Posterior vena cava (tissue), 2 donors: ENCODE measurements at regions of chr15 and their contacts with region 1.

Region 1: GRCh38 chr15:33132722-33133345 is 61.7 kb downstream of the FMN1 start:
- DNase-seq: no peak

Region 2: GRCh38 chr15:32651229-32651837 is 481.5 kb before region 1 on chr15:
- intact Hi-C with region 1: loop called in 1 of 2 experiments (anchors 10 kb)
- DNase-seq: no peak

Region 3: DNA sequence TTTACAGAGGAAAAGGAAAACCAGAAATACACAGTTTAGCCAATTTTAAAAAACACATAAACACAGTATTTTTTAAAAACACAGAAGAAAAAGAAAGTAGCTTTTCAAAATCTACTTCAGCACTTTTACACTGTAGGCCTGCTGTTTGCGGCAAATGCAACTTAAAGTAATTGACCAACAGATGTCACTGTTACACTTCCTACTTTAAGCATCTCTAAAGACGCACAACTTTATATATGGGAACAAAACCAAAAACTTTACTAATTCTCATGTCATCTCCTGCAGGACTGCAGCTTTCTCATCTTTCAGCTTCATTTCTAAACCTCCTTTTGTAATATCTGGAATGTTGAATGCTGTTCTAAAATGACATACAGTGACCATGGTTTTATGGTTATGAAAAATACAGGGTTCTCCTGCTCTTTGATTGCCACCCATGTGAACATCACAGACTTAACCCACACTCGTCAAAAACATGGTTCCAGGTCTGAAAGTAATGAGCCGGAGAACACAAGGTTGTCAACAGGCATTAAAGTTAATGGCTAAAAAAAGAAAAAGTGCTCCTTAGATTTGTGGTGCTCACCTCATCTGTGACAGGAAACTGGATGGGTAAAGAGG is 46.2 kb before region 1 on chr15:
- intact Hi-C with region 1: loop called in 1 of 2 experiments (anchors 10 kb)
- DNase-seq: no peak

Region 4: DNA sequence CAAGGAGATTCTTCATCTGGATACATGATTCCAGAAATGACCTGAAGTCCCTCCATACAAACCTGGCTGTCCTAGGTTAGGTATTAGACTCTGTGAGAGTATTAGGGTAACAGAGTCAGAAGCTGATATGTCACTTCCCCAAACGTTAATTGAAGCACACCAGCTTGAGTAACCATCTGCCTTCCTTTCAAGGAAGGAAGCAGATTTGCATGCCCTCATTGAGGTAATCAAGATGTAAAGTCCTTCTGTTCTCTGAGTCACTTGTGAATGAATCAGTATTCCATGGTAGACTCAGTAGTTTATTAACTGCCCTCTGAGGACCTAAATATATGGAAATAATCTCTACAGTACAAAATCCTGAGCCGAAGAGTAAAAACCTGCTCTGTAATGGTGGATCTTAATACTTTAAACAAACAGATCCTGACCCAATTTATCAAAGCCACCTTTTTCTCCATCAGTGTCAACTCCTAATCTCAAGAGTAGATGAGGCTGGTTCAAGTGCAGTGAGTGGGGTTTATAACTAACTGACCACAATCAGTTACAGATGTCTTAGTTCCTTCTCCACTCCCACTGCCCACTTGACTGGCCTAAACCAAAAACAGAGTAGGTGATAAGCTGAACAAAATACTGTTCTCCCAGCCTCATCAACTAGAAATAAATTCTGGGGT is 589.3 kb after region 1 on chr15:
- intact Hi-C with region 1: no loop called
- DNase-seq: no peak